ENCODE measurements at regions of chr2 and their contacts with region 1.

Region 1: DNA sequence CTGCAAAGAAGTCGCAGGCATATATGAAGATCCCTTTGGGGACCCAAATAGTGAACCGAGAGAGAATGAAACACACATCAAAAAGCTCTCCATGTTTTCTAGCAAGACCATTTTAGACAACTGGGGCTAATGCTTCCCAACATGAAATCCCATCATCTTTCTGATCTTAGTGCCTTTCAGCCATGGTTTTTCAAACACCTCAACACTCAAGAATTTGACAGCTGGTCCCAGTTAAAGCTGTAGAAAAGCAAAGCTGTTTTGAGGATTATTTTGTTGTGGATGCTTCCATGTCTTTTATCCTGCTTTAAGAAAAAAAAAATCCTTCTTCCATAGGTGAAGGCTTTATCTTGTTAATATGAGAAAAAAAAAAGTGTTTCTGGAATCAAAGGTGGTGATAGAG is 259.1 kb downstream of the STK39 start:
- DNase-seq: no peak
- ATAC-seq: no peak
- H3K4me3 ChIP-seq: no peak overlapping the region
- H3K27ac ChIP-seq: no peak overlapping the region
- H3K4me1 ChIP-seq: peaks cover 0 to 12% (median 0%) of the 10 kb centered on the region in 12 donors
- H3K27me3 ChIP-seq: no peaks in the 10 kb centered on the region
- CTCF ChIP-seq: no peak
- POLR2A ChIP-seq: no peak

Region 2: DNA sequence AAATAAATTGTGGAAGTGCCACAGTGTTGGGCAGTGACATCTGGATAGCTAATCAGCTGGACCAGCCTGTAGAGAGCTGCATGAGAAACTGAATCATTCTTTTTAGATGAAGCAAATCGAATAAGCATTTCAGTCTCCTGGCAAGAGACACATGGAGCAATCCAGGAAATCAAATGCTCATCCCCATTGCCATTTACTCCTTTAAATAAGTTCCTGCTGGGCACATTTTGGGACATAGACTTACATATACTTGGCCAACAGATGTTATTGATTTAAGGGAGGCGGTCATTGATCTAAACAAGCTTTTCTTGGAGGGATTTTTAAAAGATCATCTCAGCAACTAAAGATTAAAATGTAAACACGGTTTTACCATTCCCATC is 48.0 kb before region 1 on chr2:
- intact Hi-C with region 1: loop called in 1 of 10 experiments (anchors 2 kb)
- DNase-seq: no peak
- ATAC-seq: no peak
- H3K4me3 ChIP-seq: no peak overlapping the region
- H3K27ac ChIP-seq: no peak overlapping the region
- H3K4me1 ChIP-seq: peaks cover 0 to 10% (median 0%) of the 10 kb centered on the region in 12 donors
- H3K27me3 ChIP-seq: peaks cover 0 to 5% (median 0%) of the 10 kb centered on the region in 9 donors
- CTCF ChIP-seq: no peak
- POLR2A ChIP-seq: no peak

Region 3: GRCh38 chr2:168025487-168026202 is 37.3 kb after region 1 on chr2:
- intact Hi-C with region 1: no loop called
- DNase-seq: no peak
- ATAC-seq: peak in 1 of 4 donors; percentile 41
- H3K4me3 ChIP-seq: no peak overlapping the region
- H3K27ac ChIP-seq: no peak overlapping the region
- H3K4me1 ChIP-seq: peaks cover 0 to 13% (median 0%) of the 10 kb centered on the region in 12 donors
- H3K27me3 ChIP-seq: no peaks in the 10 kb centered on the region
- CTCF ChIP-seq: no peak
- POLR2A ChIP-seq: no peak

Measured in heart left ventricle (tissue), 16 donors.